Endothelial cell of umbilical vein (primary cell): ENCODE measurements at regions of chr14 and their contacts with region 1.

Region 1: GRCh38 chr14:55270832-55271565 is at the start of gene FBXO34:
- DNase-seq: peak; percentile 98
- H3K4me3 ChIP-seq: peak within 1 kb of the TSS; percentile 85 to 99 (median 98)
- H3K27ac ChIP-seq: peak within 1 kb of the TSS; percentile 88
- H3K4me1 ChIP-seq: peaks cover 25% of the 10 kb centered on the region
- H3K27me3 ChIP-seq: no peaks in the 10 kb centered on the region
- CTCF ChIP-seq: peak; percentile 98 to 100
- POLR2A ChIP-seq: peak; percentile 71
- total RNA-seq, gene FBXO34: 14.2 and 16.5 TPM in 2 replicates

Region 2: DNA sequence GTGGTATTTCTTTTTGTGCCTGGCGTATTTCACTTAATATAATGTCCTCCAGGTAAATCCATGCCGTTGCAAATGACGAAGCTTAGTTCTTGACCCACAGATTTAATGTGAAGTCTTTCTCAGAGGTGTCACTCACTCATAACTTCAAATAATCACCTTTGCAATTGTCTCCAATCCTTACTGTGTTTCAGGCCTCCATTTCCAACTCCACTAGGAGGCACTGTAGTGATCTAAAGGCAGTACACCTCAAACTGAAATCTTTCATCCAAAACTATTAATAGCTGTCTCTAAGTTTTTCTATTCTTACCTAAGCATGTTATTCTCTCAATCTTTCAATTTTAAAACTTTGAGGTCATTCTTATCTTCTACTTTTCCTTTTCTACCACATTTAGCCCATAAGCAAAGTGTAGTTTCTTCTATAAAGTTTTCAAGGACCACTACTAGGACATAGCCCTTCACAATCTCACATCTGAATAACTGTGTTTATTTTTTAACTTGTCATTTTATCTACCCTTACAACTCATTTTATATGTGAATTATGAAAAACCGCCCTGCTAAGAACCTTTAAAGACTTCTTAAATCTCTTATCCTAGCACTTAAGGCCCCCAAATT is 25.2 kb before region 1 on chr14:
- CTCF ChIA-PET with region 1: interaction called, 5 read pairs
- POLR2A ChIA-PET with region 1: no interaction called
- dilution Hi-C with region 1: no loop called
- intact Hi-C with region 1: loop called (anchors 2 kb)
- DNase-seq: peak; percentile 49
- H3K4me3 ChIP-seq: no peak overlapping the region
- H3K27ac ChIP-seq: no peak overlapping the region
- H3K4me1 ChIP-seq: no peaks in the 10 kb centered on the region
- H3K27me3 ChIP-seq: peaks cover 23 to 33% of the 10 kb centered on the region in 2 experiments
- CTCF ChIP-seq: peak; percentile 52 to 64
- POLR2A ChIP-seq: no peak

Region 3: DNA sequence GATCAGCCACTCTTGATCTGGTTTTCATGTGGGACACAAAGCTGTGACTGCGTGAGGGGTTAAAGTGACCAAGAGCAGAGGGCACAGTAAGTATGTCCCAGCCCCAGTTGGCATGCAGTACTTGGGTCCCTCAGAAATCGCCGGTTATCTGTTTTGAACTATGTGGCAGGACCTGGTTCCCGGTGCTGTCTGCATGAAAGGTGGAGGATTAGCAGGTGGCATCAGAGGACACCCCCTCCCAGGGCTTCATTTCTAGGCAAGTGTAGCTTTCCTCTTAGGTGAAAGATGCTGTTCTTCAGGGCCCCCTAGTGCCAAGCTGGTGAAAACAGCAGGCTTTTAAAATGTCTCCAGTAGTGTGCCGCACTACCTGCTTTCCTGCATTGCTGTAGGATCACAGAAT is 83.5 kb after region 1 on chr14:
- CTCF ChIA-PET with region 1: interaction called, 71 read pairs
- POLR2A ChIA-PET with region 1: no interaction called
- dilution Hi-C with region 1: no loop called
- intact Hi-C with region 1: loop called (anchors 1 kb)
- DNase-seq: peak; percentile 43
- H3K4me3 ChIP-seq: no peak overlapping the region
- H3K27ac ChIP-seq: no peak overlapping the region
- H3K4me1 ChIP-seq: no peaks in the 10 kb centered on the region
- H3K27me3 ChIP-seq: no peaks in the 10 kb centered on the region
- CTCF ChIP-seq: peak; percentile 54 to 72
- POLR2A ChIP-seq: no peak

Region 4: GRCh38 chr14:55430024-55430690 is 159.2 kb after region 1 on chr14:
- CTCF ChIA-PET with region 1: interaction called, 5 read pairs
- POLR2A ChIA-PET with region 1: no interaction called
- dilution Hi-C with region 1: no loop called
- intact Hi-C with region 1: loop called (anchors 1 kb)
- DNase-seq: peak; percentile 76
- H3K4me3 ChIP-seq: no peak overlapping the region
- H3K27ac ChIP-seq: no peak overlapping the region
- H3K4me1 ChIP-seq: no peaks in the 10 kb centered on the region
- H3K27me3 ChIP-seq: peaks cover 0 to under 1% of the 10 kb centered on the region in 2 experiments
- CTCF ChIP-seq: peak; percentile 30 to 44
- POLR2A ChIP-seq: no peak